Naive thymus-derived CD4-positive, alpha-beta T cell (primary cell): ENCODE measurements at regions of chr16 and their contacts with region 1.

Region 1: GRCh38 chr16:71564155-71564967 is 12.5 kb downstream of the TAT start:
- DNase-seq: peak in 1 of 9 donors; percentile 3
- ATAC-seq: no peak
- H3K4me3 ChIP-seq: peak overlapping the region; percentile 63
- H3K4me3 Mint-ChIP-seq: peak overlapping the region; percentile 83 to 98 (median 91)
- H3K27ac ChIP-seq: peak overlapping the region; percentile 75
- H3K27ac Mint-ChIP-seq: peak overlapping the region; percentile 92 to 98 (median 94)
- H3K4me1 ChIP-seq: peaks cover 13 to 15% of the 10 kb centered on the region in 2 donors
- H3K4me1 Mint-ChIP-seq: peaks cover 10 to 23% (median 16%) of the 10 kb centered on the region in 7 donors
- H3K27me3 ChIP-seq: no peaks in the 10 kb centered on the region
- H3K27me3 Mint-ChIP-seq: peaks cover 0 to 15% (median 0%) of the 10 kb centered on the region in 5 donors

Region 2: DNA sequence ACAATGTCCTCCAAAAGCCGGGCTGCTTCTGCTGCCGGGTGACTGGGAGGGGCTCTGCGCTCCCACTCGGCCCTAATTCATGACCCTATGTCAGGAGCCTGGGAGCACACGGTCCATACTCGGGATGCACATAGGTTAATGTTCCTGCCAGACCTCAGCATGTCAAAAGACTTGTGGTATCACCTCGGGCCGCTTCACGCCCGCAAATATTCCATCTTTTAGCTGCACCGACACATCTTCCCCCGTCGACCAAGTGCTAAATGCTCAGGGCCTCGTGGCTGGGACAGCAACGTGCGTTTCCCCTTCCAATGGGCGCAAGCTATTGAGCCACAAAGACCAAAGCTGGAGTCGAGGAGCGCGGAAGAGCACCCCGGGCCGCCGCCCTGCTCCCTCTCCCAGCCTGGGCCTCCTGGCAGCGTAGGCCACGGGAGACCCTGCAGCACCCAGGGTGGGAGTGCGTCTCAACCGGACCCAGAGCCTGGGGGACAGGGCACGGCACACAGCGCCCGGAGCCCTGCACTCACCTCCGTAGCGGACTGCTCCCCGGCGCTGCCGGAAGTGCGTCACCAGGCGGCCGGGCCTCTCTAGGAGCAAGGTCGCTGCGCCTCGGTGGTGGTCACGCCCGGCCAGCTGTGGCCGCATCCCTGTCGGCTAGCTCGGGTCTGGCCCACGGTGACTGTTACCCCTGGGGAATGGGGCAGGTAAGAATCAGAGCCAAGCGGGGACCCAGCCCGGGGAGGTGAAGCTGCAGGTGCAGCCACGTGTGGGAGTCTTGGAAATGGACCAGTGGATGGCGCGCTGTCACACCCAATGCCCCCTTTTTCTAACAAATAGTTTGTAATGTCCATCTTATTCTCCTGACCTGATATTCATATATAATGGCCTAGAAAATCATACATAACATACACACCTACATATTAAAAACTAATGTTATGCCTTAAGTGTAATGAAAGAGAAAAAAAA is 102.4 kb before region 1 on chr16 and contains the start of gene ZNF23:
- CTCF ChIA-PET with region 1: interaction called, 5 read pairs
- POLR2A ChIA-PET with region 1: interaction called, 4 read pairs
- intact Hi-C with region 1: loop called (anchors 1 to 2 kb)
- DNase-seq: peak; percentile 53 to 84 (median 72)
- ATAC-seq: peak; percentile 99
- H3K4me3 ChIP-seq: peak within 1 kb of the TSS; percentile 92
- H3K4me3 Mint-ChIP-seq: peak within 1 kb of the TSS; percentile 88 to 97 (median 94)
- H3K27ac ChIP-seq: peak within 1 kb of the TSS; percentile 87
- H3K27ac Mint-ChIP-seq: peak within 1 kb of the TSS; percentile 85 to 98 (median 92)
- H3K4me1 ChIP-seq: peaks cover 4 to 6% of the 10 kb centered on the region in 2 donors
- H3K4me1 Mint-ChIP-seq: peaks cover 13 to 39% (median 27%) of the 10 kb centered on the region in 7 donors
- H3K27me3 ChIP-seq: no peaks in the 10 kb centered on the region
- H3K27me3 Mint-ChIP-seq: no peaks in the 10 kb centered on the region
- total RNA-seq, gene ZNF23: 6.5 to 16.0 (median 8.8) TPM

Region 3: GRCh38 chr16:71645453-71645852 is 81.1 kb after region 1 on chr16:
- CTCF ChIA-PET with region 1: no interaction called
- POLR2A ChIA-PET with region 1: no interaction called
- intact Hi-C with region 1: loop called in 1 of 2 experiments (anchors 1 kb)
- DNase-seq: no peak
- ATAC-seq: peak; percentile 38
- H3K4me3 ChIP-seq: no peak overlapping the region
- H3K4me3 Mint-ChIP-seq: no peak overlapping the region
- H3K27ac ChIP-seq: no peak overlapping the region
- H3K27ac Mint-ChIP-seq: no peak overlapping the region
- H3K4me1 ChIP-seq: no peaks in the 10 kb centered on the region
- H3K4me1 Mint-ChIP-seq: no peaks in the 10 kb centered on the region
- H3K27me3 ChIP-seq: no peaks in the 10 kb centered on the region
- H3K27me3 Mint-ChIP-seq: no peaks in the 10 kb centered on the region

Region 4: DNA sequence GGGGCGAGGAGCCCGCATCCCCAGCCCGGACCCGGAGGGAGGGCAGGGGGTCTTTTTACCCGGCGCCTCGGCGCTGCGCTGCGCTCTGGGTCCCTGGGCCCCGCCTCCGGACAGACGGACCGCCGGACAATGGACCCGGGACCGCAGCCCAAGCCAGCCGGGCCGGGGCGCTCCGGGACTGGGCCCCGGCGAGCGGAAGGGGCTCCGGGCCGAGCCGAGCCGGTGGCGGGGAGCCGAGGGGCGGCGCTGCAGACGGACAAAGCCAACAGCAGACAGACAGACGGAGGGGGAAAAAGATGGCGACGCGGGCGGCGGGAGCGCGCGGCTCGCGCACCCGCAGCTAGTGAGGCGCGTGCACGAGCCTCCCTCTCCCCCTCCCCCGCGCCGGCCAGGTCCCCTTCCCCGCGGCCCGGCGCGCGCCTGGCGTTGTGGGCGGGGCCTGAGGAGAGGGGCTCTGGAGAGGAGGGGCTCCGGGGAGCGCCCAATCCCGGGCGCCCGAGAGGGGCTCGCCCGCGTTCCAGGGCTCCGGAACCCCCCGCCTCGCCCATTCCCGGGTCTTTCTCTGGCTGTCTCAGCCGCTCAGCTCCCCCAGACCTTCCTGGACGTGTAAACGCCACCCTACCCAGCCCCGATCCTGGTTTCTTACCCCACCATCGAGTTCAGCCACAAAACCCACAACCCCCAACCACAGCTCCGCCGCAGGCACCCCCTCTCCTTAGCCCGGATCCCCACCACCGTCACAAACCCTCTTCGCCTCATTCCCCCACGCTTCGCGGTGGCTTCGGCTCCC is 319.7 kb after region 1 on chr16 and contains the start of gene ZNF821:
- CTCF ChIA-PET with region 1: no interaction called
- POLR2A ChIA-PET with region 1: interaction called, 6 read pairs
- intact Hi-C with region 1: loop called in 1 of 2 experiments (anchors 10 kb)
- DNase-seq: peak; percentile 62 to 81 (median 68)
- ATAC-seq: peak; percentile 68
- H3K4me3 ChIP-seq: peak within 1 kb of the TSS; percentile 67
- H3K4me3 Mint-ChIP-seq: peak within 1 kb of the TSS; percentile 84 to 99 (median 96)
- H3K27ac ChIP-seq: peak within 1 kb of the TSS; percentile 84
- H3K27ac Mint-ChIP-seq: peak within 1 kb of the TSS; percentile 88 to 97 (median 95)
- H3K4me1 ChIP-seq: peaks cover 30 to 33% of the 10 kb centered on the region in 2 donors
- H3K4me1 Mint-ChIP-seq: peaks cover 44 to 56% (median 50%) of the 10 kb centered on the region in 7 donors
- H3K27me3 ChIP-seq: no peaks in the 10 kb centered on the region
- H3K27me3 Mint-ChIP-seq: peaks cover 0 to 20% (median 0%) of the 10 kb centered on the region in 5 donors
- total RNA-seq, gene ZNF821: 2.6 to 13.3 (median 7.0) TPM

Region 5: GRCh38 chr16:72008424-72009216 is 444.3 kb after region 1 on chr16 and contains the start of gene DHODH:
- CTCF ChIA-PET with region 1: no interaction called
- POLR2A ChIA-PET with region 1: no interaction called
- intact Hi-C with region 1: loop called in 1 of 2 experiments (anchors 1 kb)
- DNase-seq: peak; percentile 92 to 99 (median 97)
- ATAC-seq: peak; percentile 100
- H3K4me3 ChIP-seq: peak within 1 kb of the TSS; percentile 100
- H3K4me3 Mint-ChIP-seq: peak within 1 kb of the TSS; percentile 92 to 100 (median 98)
- H3K27ac ChIP-seq: peak within 1 kb of the TSS; percentile 62
- H3K27ac Mint-ChIP-seq: peak within 1 kb of the TSS; percentile 75 to 96 (median 89)
- H3K4me1 ChIP-seq: no peaks in the 10 kb centered on the region
- H3K4me1 Mint-ChIP-seq: peaks cover 9 to 22% (median 16%) of the 10 kb centered on the region in 7 donors
- H3K27me3 ChIP-seq: no peaks in the 10 kb centered on the region
- H3K27me3 Mint-ChIP-seq: peaks cover 0 to 3% (median 0%) of the 10 kb centered on the region in 5 donors
- total RNA-seq, gene DHODH: 4.9 to 15.6 (median 14.0) TPM